Naive thymus-derived CD4-positive, alpha-beta T cell (primary cell): ENCODE measurements at regions of chr5 and their contacts with region 1.

Region 1: GRCh38 chr5:131281133-131281867 is 17.4 kb downstream of the CDC42SE2 start:
- DNase-seq: peak in 7 of 9 donors; percentile 74 to 94 (median 89)
- ATAC-seq: peak; percentile 91
- H3K4me3 ChIP-seq: peak overlapping the region; percentile 50
- H3K4me3 Mint-ChIP-seq: peak overlapping the region; percentile 72 to 87 (median 80)
- H3K27ac ChIP-seq: peak overlapping the region; percentile 80
- H3K27ac Mint-ChIP-seq: peak overlapping the region; percentile 82 to 98 (median 94)
- H3K4me1 ChIP-seq: peaks cover 65 to 88% of the 10 kb centered on the region in 2 donors
- H3K4me1 Mint-ChIP-seq: peaks cover 42 to 90% (median 80%) of the 10 kb centered on the region in 7 donors
- H3K27me3 ChIP-seq: no peaks in the 10 kb centered on the region
- H3K27me3 Mint-ChIP-seq: peaks cover 0 to 3% (median 0%) of the 10 kb centered on the region in 5 donors

Region 2: GRCh38 chr5:130978475-130978874 is 302.8 kb before region 1 on chr5:
- CTCF ChIA-PET with region 1: no interaction called
- POLR2A ChIA-PET with region 1: no interaction called
- intact Hi-C with region 1: no loop called
- DNase-seq: no peak
- ATAC-seq: no peak
- H3K4me3 ChIP-seq: no peak overlapping the region
- H3K4me3 Mint-ChIP-seq: no peak overlapping the region
- H3K27ac ChIP-seq: no peak overlapping the region
- H3K27ac Mint-ChIP-seq: no peak overlapping the region
- H3K4me1 ChIP-seq: no peaks in the 10 kb centered on the region
- H3K4me1 Mint-ChIP-seq: no peaks in the 10 kb centered on the region
- H3K27me3 ChIP-seq: no peaks in the 10 kb centered on the region
- H3K27me3 Mint-ChIP-seq: peaks cover 0 to 28% (median 13%) of the 10 kb centered on the region in 5 donors

Region 3: GRCh38 chr5:131165119-131165727 is 116.1 kb before region 1 on chr5 and contains the start of gene HINT1:
- CTCF ChIA-PET with region 1: no interaction called
- POLR2A ChIA-PET with region 1: interaction called, 4 read pairs
- intact Hi-C with region 1: loop called in 1 of 2 experiments (anchors 1 kb)
- DNase-seq: peak; percentile 86 to 98 (median 93)
- ATAC-seq: peak; percentile 89
- H3K4me3 ChIP-seq: peak within 1 kb of the TSS; percentile 97
- H3K4me3 Mint-ChIP-seq: peak within 1 kb of the TSS; percentile 93 to 98 (median 97)
- H3K27ac ChIP-seq: peak within 1 kb of the TSS; percentile 91
- H3K27ac Mint-ChIP-seq: peak within 1 kb of the TSS; percentile 95 to 99 (median 98)
- H3K4me1 ChIP-seq: peaks cover 15 to 23% of the 10 kb centered on the region in 2 donors
- H3K4me1 Mint-ChIP-seq: peaks cover 28 to 74% (median 61%) of the 10 kb centered on the region in 7 donors
- H3K27me3 ChIP-seq: no peaks in the 10 kb centered on the region
- H3K27me3 Mint-ChIP-seq: no peaks in the 10 kb centered on the region
- total RNA-seq, gene HINT1: 172 to 319 (median 233) TPM

Region 4: DNA sequence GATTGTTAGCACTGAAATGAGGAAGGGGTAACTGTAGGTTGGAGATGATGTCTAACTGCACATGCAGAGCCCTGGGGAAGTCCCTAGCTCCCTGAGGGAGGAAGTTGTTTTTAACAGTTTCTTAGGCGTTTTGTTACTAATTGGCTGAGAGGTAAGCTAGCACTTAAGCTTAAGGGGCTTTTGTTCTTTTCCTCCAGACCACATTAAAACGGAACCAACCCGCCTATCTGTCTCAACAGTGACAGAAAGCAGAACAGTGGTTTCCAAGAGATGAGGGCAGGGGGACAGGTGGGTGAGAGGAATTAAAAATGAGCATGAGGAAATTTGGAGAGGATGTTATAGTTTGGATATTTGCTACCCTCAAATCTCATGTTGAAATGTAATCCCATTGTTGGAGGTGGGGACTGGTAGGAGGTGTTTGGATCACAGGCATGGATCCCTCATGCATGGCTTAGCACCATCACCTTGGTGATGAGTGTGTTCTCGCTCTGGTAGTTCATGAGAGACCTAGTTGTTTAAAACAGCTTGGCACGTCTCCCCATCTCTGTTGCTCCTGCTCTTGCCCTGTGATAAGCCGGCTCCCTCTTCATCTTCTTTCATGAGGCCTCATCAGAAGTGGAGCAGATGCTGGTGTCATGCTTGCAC is 71.7 kb before region 1 on chr5:
- CTCF ChIA-PET with region 1: interaction called, 3 read pairs
- POLR2A ChIA-PET with region 1: no interaction called
- intact Hi-C with region 1: loop called in 1 of 2 experiments (anchors 1 kb)
- DNase-seq: peak; percentile 11 to 91 (median 84)
- ATAC-seq: peak; percentile 98
- H3K4me3 ChIP-seq: peak overlapping the region; percentile 21
- H3K4me3 Mint-ChIP-seq: peak overlapping the region; percentile 72 to 90 (median 80)
- H3K27ac ChIP-seq: peak overlapping the region; percentile 77
- H3K27ac Mint-ChIP-seq: peak overlapping the region; percentile 91 to 98 (median 96)
- H3K4me1 ChIP-seq: peaks cover 18 to 37% of the 10 kb centered on the region in 2 donors
- H3K4me1 Mint-ChIP-seq: peaks cover 42 to 75% (median 61%) of the 10 kb centered on the region in 7 donors
- H3K27me3 ChIP-seq: no peaks in the 10 kb centered on the region
- H3K27me3 Mint-ChIP-seq: no peaks in the 10 kb centered on the region

Region 5: DNA sequence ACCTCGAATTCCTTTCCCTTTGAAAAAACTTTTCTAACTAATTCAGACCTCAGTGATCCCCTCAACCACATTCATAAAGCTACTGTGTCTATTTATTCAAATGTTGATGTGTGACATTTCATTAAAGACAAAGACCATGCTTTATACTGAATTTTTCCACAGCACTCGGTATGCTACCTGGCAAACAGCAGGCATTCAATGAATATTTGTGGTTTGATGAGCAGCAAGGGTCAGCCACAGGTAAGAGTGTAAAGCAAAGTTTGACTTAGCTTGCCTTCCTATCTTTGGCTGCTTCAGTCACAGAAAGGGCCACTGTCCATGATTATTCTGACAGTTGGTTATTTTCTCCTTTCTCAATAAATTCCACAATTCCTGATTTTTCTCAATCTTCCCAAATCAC is 22.6 kb before region 1 on chr5:
- CTCF ChIA-PET with region 1: no interaction called
- POLR2A ChIA-PET with region 1: interaction called, 176 read pairs
- intact Hi-C with region 1: loop called (anchors 1 to 5 kb)
- DNase-seq: no peak
- ATAC-seq: no peak
- H3K4me3 ChIP-seq: peak overlapping the region; percentile 20
- H3K4me3 Mint-ChIP-seq: peak overlapping the region; percentile 46 to 88 (median 80)
- H3K27ac ChIP-seq: peak overlapping the region; percentile 61
- H3K27ac Mint-ChIP-seq: peak overlapping the region; percentile 85 to 96 (median 93)
- H3K4me1 ChIP-seq: peaks cover 62 to 63% of the 10 kb centered on the region in 2 donors
- H3K4me1 Mint-ChIP-seq: peaks cover 52 to 91% (median 75%) of the 10 kb centered on the region in 7 donors
- H3K27me3 ChIP-seq: no peaks in the 10 kb centered on the region
- H3K27me3 Mint-ChIP-seq: no peaks in the 10 kb centered on the region

Region 6: DNA sequence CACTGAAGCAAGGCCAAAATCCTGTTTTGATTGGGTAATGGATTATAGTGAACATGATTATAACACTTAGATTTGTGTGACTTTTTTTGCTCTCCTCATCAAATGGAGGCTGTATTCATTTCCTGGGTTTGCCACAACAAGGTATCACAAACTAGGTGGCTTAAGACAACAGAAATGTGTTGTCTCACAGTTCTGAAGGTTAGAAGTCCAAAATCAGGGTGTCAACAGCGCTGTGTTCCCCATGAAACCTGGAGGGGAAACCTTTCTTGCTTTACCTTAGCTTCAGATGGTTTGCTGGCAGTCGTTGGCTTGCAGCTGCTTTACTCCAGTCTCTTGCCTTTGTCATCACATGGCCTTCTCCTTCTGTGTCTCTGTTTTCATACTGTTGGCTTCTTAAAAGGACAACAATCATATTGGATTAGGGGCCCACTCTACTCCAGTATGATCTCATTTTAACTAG is 14.9 kb after region 1 on chr5:
- CTCF ChIA-PET with region 1: interaction called, 4 read pairs
- POLR2A ChIA-PET with region 1: interaction called, 5 read pairs
- intact Hi-C with region 1: loop called (anchors 1 to 2 kb)
- DNase-seq: peak in 1 of 9 donors; percentile 43
- ATAC-seq: peak; percentile 76
- H3K4me3 ChIP-seq: no peak overlapping the region
- H3K4me3 Mint-ChIP-seq: peak overlapping the region; percentile 56 to 76 (median 68)
- H3K27ac ChIP-seq: peak overlapping the region; percentile 40
- H3K27ac Mint-ChIP-seq: peak overlapping the region; percentile 72 to 90 (median 77)
- H3K4me1 ChIP-seq: peaks cover 59 to 88% of the 10 kb centered on the region in 2 donors
- H3K4me1 Mint-ChIP-seq: peaks cover 56 to 92% (median 76%) of the 10 kb centered on the region in 7 donors
- H3K27me3 ChIP-seq: no peaks in the 10 kb centered on the region
- H3K27me3 Mint-ChIP-seq: no peaks in the 10 kb centered on the region

Region 7: DNA sequence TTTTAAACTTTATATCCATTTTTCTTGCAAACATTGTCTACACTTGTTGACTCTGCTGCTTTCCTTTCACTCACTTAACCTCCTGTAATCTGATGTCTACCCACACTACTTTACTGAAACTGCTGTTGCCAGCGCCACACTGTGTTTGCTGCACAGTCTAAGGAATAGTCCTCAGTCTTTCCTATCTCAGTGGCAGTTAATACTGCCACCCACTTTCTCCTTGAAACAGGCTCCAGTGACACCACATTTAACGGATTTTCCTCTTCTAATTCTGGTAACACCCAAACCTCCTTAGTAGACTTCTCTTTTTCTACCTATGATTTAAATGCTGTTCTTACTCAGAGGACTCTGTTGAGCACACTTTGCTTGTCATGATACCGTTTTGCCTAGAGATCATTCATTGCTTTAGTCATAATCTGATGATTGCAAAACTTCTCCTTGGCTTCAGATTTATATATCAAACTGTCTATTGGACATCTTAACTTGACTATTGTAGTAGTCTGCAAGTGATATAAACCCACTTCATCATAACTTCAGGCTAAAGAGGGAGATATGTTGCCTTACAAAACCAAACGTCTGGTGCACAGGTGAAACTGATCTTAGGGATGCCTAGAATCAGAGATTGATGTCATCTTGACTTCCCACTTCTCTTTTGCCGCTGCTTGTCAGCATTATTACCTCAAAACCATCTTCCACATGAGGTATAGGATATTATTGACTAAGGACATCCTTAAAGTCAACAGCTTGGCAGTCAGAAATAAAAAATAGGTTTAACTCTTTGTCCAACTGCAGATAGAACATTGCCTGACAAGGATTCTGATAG is 76.7 kb after region 1 on chr5:
- CTCF ChIA-PET with region 1: interaction called, 3 read pairs
- POLR2A ChIA-PET with region 1: interaction called, 5 read pairs
- intact Hi-C with region 1: loop called in 1 of 2 experiments (anchors 1 kb)
- DNase-seq: peak in 6 of 9 donors; percentile 23 to 52 (median 40)
- ATAC-seq: peak; percentile 73
- H3K4me3 ChIP-seq: no peak overlapping the region
- H3K4me3 Mint-ChIP-seq: peak overlapping the region; percentile 14 to 75 (median 56)
- H3K27ac ChIP-seq: peak overlapping the region; percentile 58
- H3K27ac Mint-ChIP-seq: peak overlapping the region; percentile 82 to 93 (median 86)
- H3K4me1 ChIP-seq: peaks cover 37 to 41% of the 10 kb centered on the region in 2 donors
- H3K4me1 Mint-ChIP-seq: peaks cover 32 to 83% (median 75%) of the 10 kb centered on the region in 7 donors
- H3K27me3 ChIP-seq: no peaks in the 10 kb centered on the region
- H3K27me3 Mint-ChIP-seq: no peaks in the 10 kb centered on the region